Dendritic cell treated with granulocyte-macrophage colony-stimulating factor and Interleukin-4, amounts not matched to agents 40 ng/mL and 50 ng/mL, for 4 days (primary cell): ENCODE measurements at regions of chr11 and their contacts with region 1.

Region 1: DNA sequence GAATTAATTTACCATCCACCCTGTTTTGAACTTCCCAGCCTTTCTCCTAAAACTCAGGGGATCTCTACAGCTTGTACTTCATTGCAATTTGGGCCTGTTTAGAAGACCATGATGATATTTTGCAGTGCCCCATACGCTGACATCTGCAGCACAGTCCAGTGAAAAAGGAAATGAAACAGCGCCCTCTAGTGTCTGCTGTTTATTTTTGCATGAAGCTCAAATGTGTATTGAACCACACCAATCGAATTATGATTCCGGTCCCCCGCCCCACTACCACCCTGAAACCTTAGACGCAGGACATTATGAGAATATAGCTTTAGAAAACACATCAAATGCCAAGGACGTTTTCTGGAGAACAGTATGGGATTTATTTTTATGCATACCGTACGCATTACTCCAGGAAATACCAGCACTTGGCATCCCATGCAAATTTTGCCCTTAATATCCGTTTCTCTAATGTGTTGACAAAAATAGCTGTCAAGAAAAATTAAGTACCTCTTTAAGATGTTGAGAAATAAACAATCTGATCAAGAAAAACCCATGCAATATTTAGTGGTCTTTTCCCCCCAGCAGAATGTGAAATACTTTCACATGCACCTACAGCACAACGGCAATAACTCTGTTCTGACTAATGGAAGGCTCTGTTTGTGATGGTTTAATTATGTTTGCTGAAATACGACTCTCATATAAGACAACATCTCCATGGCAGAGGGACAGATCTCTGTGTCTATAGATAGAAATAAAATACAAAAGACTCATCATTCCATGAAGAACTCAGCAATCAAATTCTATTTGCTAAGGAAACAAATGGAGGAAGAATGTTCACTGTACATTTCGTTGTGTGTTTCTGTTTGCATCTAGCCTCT is 93.9 kb downstream of the TECTA start:
- H3K4me3 Mint-ChIP-seq: no peak overlapping the region
- H3K27ac Mint-ChIP-seq: no peak overlapping the region
- H3K4me1 Mint-ChIP-seq: no peaks in the 10 kb centered on the region
- H3K27me3 Mint-ChIP-seq: peaks cover 20% of the 10 kb centered on the region

Region 2: GRCh38 chr11:120929664-120930154 is 265.3 kb before region 1 on chr11:
- intact Hi-C with region 1: loop called (anchors 10 kb)
- H3K4me3 Mint-ChIP-seq: no peak overlapping the region
- H3K27ac Mint-ChIP-seq: no peak overlapping the region
- H3K4me1 Mint-ChIP-seq: no peaks in the 10 kb centered on the region
- H3K27me3 Mint-ChIP-seq: peaks cover 2% of the 10 kb centered on the region